ENCODE measurements at regions of chr17 and their contacts with region 1.

Region 1: DNA sequence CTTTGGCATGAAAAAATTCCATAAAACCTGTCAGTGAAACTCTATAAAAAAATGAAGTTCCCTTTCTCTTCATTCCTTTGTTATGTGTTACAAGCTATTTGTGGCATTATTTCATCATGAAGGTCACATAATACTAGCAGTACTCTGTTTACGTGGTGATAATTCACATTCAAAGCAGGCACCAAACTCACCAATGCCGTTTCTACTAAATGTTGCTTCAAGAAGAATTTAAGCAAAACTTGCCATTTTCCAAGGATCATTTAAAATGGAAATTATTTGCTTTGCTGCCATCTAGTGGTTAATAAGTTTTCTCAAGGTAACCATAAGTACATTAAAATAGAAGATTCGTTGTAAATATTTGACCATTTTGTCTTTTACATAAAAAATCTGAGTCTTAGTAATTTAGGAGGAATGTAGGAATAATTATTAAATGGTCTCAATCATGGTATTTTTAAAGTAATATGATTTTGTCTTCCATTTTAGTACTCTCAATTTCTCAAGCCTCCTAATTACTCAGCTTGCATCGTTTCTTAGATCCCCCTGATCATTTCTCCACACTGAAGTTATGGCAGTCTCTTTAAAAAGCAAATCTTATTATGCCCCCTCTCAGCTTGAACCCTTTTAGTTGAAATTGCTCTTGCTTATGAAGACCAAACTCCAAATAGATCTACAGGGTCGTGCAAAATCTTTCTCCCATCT is 80.8 kb downstream of the OMG start:
- DNase-seq: no peak
- H3K4me3 ChIP-seq: no peak overlapping the region
- H3K27ac ChIP-seq: peak overlapping the region in 1 of 4 donors; percentile 40
- H3K4me1 ChIP-seq: peaks cover 0 to 4% (median 0%) of the 10 kb centered on the region in 4 donors
- H3K27me3 ChIP-seq: no peaks in the 10 kb centered on the region
- CTCF ChIP-seq: peak; percentile 16 to 69 (median 52)
- EP300 ChIP-seq: no peak
- POLR2A ChIP-seq: no peak

Region 2: DNA sequence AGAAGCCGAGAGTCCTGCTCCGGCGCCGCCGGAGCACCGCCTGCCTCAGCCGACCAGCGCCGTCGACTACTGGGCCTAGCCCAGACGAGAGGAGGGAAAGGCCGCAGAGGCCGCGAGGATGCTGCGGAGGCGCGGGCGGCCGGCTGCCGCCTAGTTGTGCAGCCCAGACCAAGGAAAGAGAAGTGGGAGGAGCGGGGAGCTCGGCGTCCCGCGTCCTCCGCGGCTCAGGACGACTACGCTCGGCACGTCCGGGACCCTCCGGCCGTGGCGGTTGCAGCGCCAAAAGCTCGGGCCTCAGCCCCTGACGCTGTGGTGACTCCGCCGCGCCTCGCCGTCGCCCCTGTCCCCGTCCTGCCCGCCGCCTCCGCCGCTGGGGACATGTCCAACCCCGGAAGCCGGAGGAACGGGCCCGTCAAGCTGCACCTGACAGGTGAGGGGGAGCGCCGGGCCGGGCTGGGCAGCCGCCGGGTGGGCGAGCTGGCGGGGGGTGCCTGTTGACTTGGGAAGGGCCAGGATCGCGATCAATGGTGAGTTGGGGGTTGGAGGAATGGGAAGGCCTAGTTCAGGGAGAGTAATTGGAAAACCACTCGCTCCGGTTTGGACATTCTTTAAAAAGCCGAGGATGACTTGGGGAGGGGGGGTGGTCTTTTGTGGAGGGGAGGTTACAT is 207.7 kb before region 1 on chr17:
- intact Hi-C with region 1: loop called (anchors 2 kb)
- DNase-seq: peak; percentile 73
- H3K4me3 ChIP-seq: peak overlapping the region; percentile 49 to 66 (median 63)
- H3K27ac ChIP-seq: peak overlapping the region; percentile 72 to 92 (median 83)
- H3K4me1 ChIP-seq: peaks cover 0 to 7% (median 0%) of the 10 kb centered on the region in 4 donors
- H3K27me3 ChIP-seq: no peaks in the 10 kb centered on the region
- CTCF ChIP-seq: no peak
- EP300 ChIP-seq: no peak
- POLR2A ChIP-seq: no peak

Region 3: GRCh38 chr17:31015639-31016038 is 200.6 kb before region 1 on chr17:
- intact Hi-C with region 1: loop called (anchors 2 kb)
- DNase-seq: no peak
- H3K4me3 ChIP-seq: no peak overlapping the region
- H3K27ac ChIP-seq: no peak overlapping the region
- H3K4me1 ChIP-seq: no peaks in the 10 kb centered on the region
- H3K27me3 ChIP-seq: no peaks in the 10 kb centered on the region
- CTCF ChIP-seq: no peak
- EP300 ChIP-seq: no peak
- POLR2A ChIP-seq: no peak

Region 4: DNA sequence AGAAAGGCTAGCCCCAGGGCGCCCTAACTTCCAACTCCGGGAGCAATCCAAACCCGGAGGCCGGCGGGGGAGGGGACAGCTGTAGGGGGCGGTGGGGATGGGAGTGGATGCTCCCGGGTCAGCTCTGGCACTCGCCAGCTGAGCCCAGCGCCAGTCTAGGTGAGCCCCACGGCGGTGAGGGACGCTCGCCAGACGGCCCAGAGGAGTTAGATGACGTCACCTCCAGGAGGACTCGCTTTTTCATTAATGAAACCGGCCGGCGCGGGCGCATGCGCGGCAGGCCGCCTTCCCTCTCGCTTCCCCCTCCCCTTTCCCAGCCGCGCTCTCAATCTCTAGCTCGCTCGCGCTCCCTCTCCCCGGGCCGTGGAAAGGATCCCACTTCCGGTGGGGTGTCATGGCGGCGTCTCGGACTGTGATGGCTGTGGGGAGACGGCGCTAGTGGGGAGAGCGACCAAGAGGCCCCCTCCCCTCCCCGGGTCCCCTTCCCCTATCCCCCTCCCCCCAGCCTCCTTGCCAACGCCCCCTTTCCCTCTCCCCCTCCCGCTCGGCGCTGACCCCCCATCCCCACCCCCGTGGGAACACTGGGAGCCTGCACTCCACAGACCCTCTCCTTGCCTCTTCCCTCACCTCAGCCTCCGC is 121.5 kb before region 1 on chr17 and contains the start of gene NF1:
- intact Hi-C with region 1: loop called (anchors 5 kb)
- DNase-seq: peak; percentile 99
- H3K4me3 ChIP-seq: peak within 1 kb of the TSS; percentile 73 to 100 (median 88)
- H3K27ac ChIP-seq: peak within 1 kb of the TSS; percentile 89 to 98 (median 94)
- H3K4me1 ChIP-seq: peaks cover 0 to 11% (median 9%) of the 10 kb centered on the region in 4 donors
- H3K27me3 ChIP-seq: no peaks in the 10 kb centered on the region
- CTCF ChIP-seq: no peak
- EP300 ChIP-seq: no peak
- POLR2A ChIP-seq: peak in 1 of 2 donors; percentile 29
- total RNA-seq, gene NF1: 40.7 to 83.8 (median 60.2) TPM

Region 5: GRCh38 chr17:31269578-31269983 is 53.4 kb after region 1 on chr17:
- intact Hi-C with region 1: no loop called
- DNase-seq: no peak
- H3K4me3 ChIP-seq: no peak overlapping the region
- H3K27ac ChIP-seq: peak overlapping the region in 2 of 4 donors; percentile 11 to 49
- H3K4me1 ChIP-seq: peaks cover 0 to 37% (median 17%) of the 10 kb centered on the region in 4 donors
- H3K27me3 ChIP-seq: no peaks in the 10 kb centered on the region
- CTCF ChIP-seq: no peak
- EP300 ChIP-seq: no peak
- POLR2A ChIP-seq: no peak

Region 6: GRCh38 chr17:31294820-31295488 is 78.8 kb after region 1 on chr17:
- intact Hi-C with region 1: no loop called
- DNase-seq: no peak
- H3K4me3 ChIP-seq: no peak overlapping the region
- H3K27ac ChIP-seq: no peak overlapping the region
- H3K4me1 ChIP-seq: no peaks in the 10 kb centered on the region
- H3K27me3 ChIP-seq: no peaks in the 10 kb centered on the region
- CTCF ChIP-seq: no peak
- EP300 ChIP-seq: no peak
- POLR2A ChIP-seq: no peak